HepG2 (cell line): ENCODE measurements at regions of chr4 and their contacts with region 1.

Region 1: GRCh38 chr4:73019462-73020047 is 50.0 kb downstream of the COX18 start:
- DNase-seq: peak; percentile 23
- ATAC-seq: no peak
- H3K4me3 ChIP-seq: no peak overlapping the region
- H3K27ac ChIP-seq: no peak overlapping the region
- H3K4me1 ChIP-seq: no peaks in the 10 kb centered on the region
- H3K27me3 ChIP-seq: no peaks in the 10 kb centered on the region
- CTCF ChIP-seq: peak; percentile 58
- EP300 ChIP-seq: no peak
- POLR2A ChIP-seq: no peak
- RAD21 ChIP-seq: no peak

Region 2: GRCh38 chr4:71732706-71733105 is 1286.8 kb before region 1 on chr4:
- CTCF ChIA-PET with region 1: no interaction called
- POLR2A ChIA-PET with region 1: no interaction called
- in situ Hi-C with region 1: no loop called
- intact Hi-C with region 1: loop called (anchors 5 kb)
- DNase-seq: peak; percentile 13
- ATAC-seq: no peak
- H3K4me3 ChIP-seq: no peak overlapping the region
- H3K27ac ChIP-seq: no peak overlapping the region
- H3K4me1 ChIP-seq: no peaks in the 10 kb centered on the region
- H3K27me3 ChIP-seq: no peaks in the 10 kb centered on the region
- CTCF ChIP-seq: peak; percentile 46
- EP300 ChIP-seq: no peak
- POLR2A ChIP-seq: no peak
- RAD21 ChIP-seq: no peak

Region 3: DNA sequence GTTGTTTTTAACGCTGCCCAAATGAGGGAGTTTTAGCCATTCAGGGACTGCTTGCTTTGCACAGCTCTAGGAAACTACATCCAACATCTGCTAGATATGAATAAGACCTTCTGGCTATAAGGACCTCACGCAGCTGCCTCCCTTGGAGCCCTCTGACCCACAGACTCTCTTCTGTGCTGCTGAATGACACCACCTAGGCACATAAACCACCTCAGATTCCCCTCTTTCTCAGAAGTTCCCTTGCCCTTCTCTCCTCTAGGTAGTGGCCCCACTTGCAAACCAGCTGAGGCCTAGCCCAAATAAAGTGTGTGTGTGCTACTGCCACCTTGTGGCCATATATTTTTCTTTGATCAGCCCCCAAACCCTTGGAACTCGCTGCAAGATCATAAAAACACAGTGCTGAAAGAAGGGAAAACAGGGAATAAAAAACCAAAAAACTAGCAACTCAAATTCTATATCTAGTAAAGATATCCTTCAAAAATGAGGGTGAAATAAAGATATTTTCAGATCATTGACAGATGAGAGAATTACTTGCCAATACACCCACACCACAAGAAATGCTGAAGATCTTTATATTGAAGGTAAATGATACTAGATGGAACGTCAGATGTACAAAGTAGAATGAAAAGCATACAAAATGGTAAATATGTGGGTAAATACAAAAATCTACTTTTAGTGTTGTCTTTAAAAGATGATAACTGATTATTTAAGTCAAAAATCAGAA is 716.4 kb before region 1 on chr4:
- CTCF ChIA-PET with region 1: no interaction called
- POLR2A ChIA-PET with region 1: no interaction called
- in situ Hi-C with region 1: loop called (anchors 25 kb)
- intact Hi-C with region 1: no loop called
- DNase-seq: peak; percentile 34
- ATAC-seq: peak; percentile 93
- H3K4me3 ChIP-seq: no peak overlapping the region
- H3K27ac ChIP-seq: no peak overlapping the region
- H3K4me1 ChIP-seq: no peaks in the 10 kb centered on the region
- H3K27me3 ChIP-seq: no peaks in the 10 kb centered on the region
- CTCF ChIP-seq: peak; percentile 76
- EP300 ChIP-seq: no peak
- POLR2A ChIP-seq: no peak
- RAD21 ChIP-seq: no peak

Region 4: DNA sequence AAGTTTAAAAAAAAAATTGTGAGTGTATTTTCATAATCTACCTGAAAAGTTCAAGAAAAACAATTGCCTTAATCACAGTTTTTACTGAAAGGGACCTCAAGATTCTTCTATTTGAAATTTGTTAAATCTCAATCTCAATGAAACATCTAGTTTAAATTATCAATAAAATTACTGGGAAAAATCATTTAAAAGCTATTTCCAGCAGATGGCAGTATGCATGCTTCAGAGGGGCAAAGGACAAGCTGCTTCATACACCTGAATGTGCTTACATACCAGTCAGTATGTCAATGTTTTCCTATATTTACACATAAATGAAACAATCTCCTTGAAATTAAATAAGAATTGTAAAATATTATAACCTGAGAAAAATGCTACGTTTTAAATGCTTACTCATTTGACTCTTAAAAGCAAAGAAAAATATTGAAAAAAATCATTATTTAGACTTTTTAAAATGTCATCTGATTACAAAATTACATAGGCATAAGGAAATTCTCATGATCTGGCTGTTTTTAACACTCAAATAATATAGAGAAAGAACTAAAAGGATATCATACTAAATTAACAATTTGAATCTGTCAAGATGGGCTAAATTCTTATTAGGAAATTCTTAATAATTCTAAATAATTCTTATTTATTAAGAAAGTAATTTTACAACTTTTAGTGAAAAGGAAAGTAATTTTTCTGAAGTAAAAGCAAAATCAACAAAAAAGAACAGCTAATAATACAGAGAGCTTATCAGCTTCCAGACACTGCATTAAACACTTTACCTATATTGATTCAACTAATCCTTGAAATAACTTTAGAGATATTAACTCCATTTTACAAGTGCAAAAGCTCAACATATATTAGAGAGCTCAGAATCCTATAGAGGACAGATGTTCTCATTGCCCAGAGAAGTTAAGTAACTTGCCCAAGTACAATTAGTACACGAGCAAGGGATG is 692.6 kb before region 1 on chr4:
- CTCF ChIA-PET with region 1: interaction called, 10 read pairs
- POLR2A ChIA-PET with region 1: no interaction called
- in situ Hi-C with region 1: loop called (anchors 25 kb)
- intact Hi-C with region 1: loop called (anchors 1 kb)
- DNase-seq: peak; percentile 33
- ATAC-seq: peak; percentile 49; the same call in 2 of the 3 replicates
- H3K4me3 ChIP-seq: no peak overlapping the region
- H3K27ac ChIP-seq: no peak overlapping the region
- H3K4me1 ChIP-seq: no peaks in the 10 kb centered on the region
- H3K27me3 ChIP-seq: no peaks in the 10 kb centered on the region; a peak in 1 of 5 replicates
- CTCF ChIP-seq: peak; percentile 54
- EP300 ChIP-seq: no peak
- POLR2A ChIP-seq: no peak
- RAD21 ChIP-seq: no peak

Region 5: DNA sequence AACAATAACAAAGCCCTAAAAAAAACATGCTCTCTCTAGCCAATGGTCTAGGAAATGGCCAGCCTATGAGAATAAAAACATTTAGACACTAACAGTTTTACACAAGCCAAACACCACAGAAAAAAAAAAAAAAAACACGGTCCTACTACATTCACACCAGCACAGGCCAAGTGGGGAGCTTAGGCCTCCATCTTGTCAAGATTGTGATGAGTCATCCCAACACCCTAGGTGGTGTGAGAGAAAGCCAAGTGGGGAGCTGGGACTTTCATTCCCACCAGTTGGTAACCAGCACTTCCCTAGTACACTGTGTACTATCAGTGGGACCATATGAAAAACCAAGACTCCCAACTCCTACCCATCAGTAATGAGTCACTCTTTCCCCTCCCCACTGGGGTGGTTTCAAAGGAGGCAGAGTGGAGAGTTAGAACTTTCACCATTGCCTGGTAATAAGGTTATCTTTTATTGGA is 546.1 kb before region 1 on chr4:
- CTCF ChIA-PET with region 1: no interaction called
- POLR2A ChIA-PET with region 1: no interaction called
- in situ Hi-C with region 1: no loop called
- intact Hi-C with region 1: no loop called
- DNase-seq: no peak
- ATAC-seq: no peak
- H3K4me3 ChIP-seq: no peak overlapping the region
- H3K27ac ChIP-seq: no peak overlapping the region
- H3K4me1 ChIP-seq: no peaks in the 10 kb centered on the region
- H3K27me3 ChIP-seq: no peaks in the 10 kb centered on the region
- CTCF ChIP-seq: no peak
- EP300 ChIP-seq: no peak
- POLR2A ChIP-seq: no peak
- RAD21 ChIP-seq: no peak

Region 6: GRCh38 chr4:72505314-72505744 is 514.2 kb before region 1 on chr4:
- CTCF ChIA-PET with region 1: interaction called, 12 read pairs
- POLR2A ChIA-PET with region 1: no interaction called
- in situ Hi-C with region 1: loop called (anchors 5 kb)
- intact Hi-C with region 1: no loop called
- DNase-seq: peak; percentile 24
- ATAC-seq: peak; percentile 92
- H3K4me3 ChIP-seq: no peak overlapping the region
- H3K27ac ChIP-seq: no peak overlapping the region
- H3K4me1 ChIP-seq: no peaks in the 10 kb centered on the region
- H3K27me3 ChIP-seq: no peaks in the 10 kb centered on the region
- CTCF ChIP-seq: peak; percentile 71
- EP300 ChIP-seq: no peak
- POLR2A ChIP-seq: no peak
- RAD21 ChIP-seq: 0 out of 2 replicates have a peak, but pooled peaks have one; percentile 19

Region 7: GRCh38 chr4:72531768-72532290 is 487.7 kb before region 1 on chr4:
- CTCF ChIA-PET with region 1: no interaction called
- POLR2A ChIA-PET with region 1: no interaction called
- in situ Hi-C with region 1: no loop called
- intact Hi-C with region 1: no loop called
- DNase-seq: no peak
- ATAC-seq: no peak
- H3K4me3 ChIP-seq: no peak overlapping the region
- H3K27ac ChIP-seq: no peak overlapping the region
- H3K4me1 ChIP-seq: no peaks in the 10 kb centered on the region
- H3K27me3 ChIP-seq: no peaks in the 10 kb centered on the region
- CTCF ChIP-seq: no peak
- EP300 ChIP-seq: no peak
- POLR2A ChIP-seq: no peak
- RAD21 ChIP-seq: no peak

Region 8: DNA sequence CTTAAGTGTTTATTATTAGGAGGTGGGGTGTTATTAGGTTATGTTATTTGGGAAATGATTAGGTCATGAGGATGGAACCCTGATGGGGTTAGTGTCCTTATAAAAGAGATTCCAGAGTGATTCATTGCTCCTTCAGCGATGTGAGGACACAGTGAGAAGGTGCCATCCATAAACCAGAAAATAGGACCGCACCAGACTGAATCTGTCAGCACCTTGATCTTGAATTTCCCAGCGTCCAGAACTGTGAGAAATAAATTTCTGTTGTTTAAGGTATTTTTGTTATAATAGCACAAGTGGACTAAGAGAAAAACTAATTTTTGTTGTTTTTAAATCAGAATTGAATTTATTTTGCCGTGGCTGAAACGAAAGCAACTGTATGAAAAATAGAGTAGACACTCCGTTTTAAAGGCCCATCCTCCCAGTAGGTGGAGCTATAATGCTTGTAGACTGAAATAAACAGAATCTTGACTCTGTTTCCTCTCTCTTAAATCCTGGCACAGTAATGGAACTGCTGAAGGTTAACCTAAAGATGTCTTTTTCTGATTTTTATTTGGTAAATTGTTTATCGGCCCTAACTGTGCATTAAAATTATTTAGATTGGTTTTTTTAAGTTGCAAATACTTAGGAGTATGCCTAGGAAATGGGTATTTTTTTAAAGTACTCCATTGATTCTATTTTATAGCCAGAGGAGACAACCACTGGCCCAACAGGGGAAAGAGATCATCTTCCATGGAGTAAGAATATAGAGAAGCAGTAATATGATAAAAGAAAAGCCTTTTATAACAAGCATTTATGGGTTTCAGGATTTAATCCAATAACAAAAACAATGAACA is 317.4 kb before region 1 on chr4:
- CTCF ChIA-PET with region 1: interaction called, 8 read pairs
- POLR2A ChIA-PET with region 1: no interaction called
- in situ Hi-C with region 1: loop called (anchors 10 kb)
- intact Hi-C with region 1: loop called (anchors 1 kb)
- DNase-seq: peak; percentile 42
- ATAC-seq: peak; percentile 78
- H3K4me3 ChIP-seq: peak overlapping the region; percentile 41 to 62 (median 44); a peak in 5 of 6 replicates
- H3K27ac ChIP-seq: no peak overlapping the region
- H3K4me1 ChIP-seq: no peaks in the 10 kb centered on the region
- H3K27me3 ChIP-seq: no peaks in the 10 kb centered on the region
- CTCF ChIP-seq: peak; percentile 70
- EP300 ChIP-seq: no peak
- POLR2A ChIP-seq: no peak
- RAD21 ChIP-seq: no peak

Region 9: DNA sequence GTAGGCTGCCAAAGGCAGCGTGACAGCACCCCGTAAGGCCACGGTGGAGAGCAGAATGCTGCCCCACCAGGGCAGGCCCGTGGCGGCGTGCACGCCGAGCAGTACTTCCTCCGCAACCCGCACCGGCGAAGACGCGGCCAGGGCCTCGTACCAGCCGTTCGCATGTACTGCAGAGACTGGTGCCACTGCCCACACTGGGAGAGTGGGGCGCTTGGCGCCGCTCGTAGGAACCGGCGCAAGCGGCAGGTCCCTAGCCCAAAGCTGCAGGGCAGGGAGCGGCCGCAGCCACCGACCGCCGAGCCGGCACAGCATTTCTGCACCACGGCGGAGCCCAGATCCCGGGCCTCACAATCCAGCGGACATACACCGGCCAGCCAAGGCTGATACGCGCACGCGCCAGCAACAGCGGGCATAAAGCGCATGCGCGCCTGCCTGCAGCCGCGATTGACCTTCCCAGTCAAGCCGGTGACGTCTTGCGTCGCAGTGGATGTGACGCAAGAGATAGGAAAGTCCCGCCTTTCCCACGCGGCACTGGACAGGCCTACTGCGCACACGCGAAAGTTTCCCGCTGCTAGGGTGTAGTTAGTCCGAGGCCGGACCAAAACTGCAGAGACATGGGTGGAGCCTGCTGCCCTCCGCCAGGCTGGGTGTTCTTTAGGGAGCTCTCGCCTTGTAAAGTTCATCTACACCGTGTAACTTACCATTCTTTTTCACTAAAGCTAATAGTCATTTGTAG is 50.0 kb after region 1 on chr4 and contains the start of gene COX18:
- CTCF ChIA-PET with region 1: no interaction called
- POLR2A ChIA-PET with region 1: no interaction called
- in situ Hi-C with region 1: no loop called
- intact Hi-C with region 1: no loop called
- DNase-seq: peak; percentile 95
- ATAC-seq: peak; percentile 91
- H3K4me3 ChIP-seq: peak within 1 kb of the TSS; percentile 79 to 83 (median 81)
- H3K27ac ChIP-seq: peak within 1 kb of the TSS; percentile 95
- H3K4me1 ChIP-seq: peaks cover 23% of the 10 kb centered on the region
- H3K27me3 ChIP-seq: no peaks in the 10 kb centered on the region; a peak in 1 of 5 replicates
- CTCF ChIP-seq: peak; percentile 29; the same call in 1 of the 2 replicates
- EP300 ChIP-seq: 0 out of 4 replicates have a peak, but pooled peaks of 1 of the 2 experiments have one; percentile 15
- POLR2A ChIP-seq: peak; percentile 93 to 95
- RAD21 ChIP-seq: peak; percentile 72; the same call in 1 of the 2 replicates
- total RNA-seq, gene COX18: 21.3 and 25.3 TPM in 2 replicates

Region 10: DNA sequence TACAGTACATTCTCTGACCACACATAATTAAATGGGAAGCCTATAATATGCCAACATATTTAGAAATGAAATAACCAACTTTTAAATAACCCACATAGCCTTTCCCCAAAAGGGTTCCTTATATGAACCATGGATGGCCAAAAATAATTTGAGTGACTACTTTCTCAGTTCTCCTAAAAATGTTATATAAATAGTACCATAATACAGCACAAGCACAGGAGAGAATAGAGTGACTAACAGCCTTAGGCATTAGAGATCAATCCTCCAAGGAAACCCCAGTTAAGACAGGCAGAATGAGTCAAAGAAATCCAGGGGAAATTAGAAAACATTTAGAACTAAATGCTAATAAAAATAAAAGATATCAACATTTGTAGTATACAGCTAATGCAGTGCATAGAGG is 188.8 kb after region 1 on chr4:
- CTCF ChIA-PET with region 1: no interaction called
- POLR2A ChIA-PET with region 1: no interaction called
- in situ Hi-C with region 1: no loop called
- intact Hi-C with region 1: no loop called
- DNase-seq: no peak
- ATAC-seq: no peak
- H3K4me3 ChIP-seq: no peak overlapping the region
- H3K27ac ChIP-seq: no peak overlapping the region
- H3K4me1 ChIP-seq: no peaks in the 10 kb centered on the region
- H3K27me3 ChIP-seq: no peaks in the 10 kb centered on the region
- CTCF ChIP-seq: no peak
- EP300 ChIP-seq: no peak
- POLR2A ChIP-seq: no peak
- RAD21 ChIP-seq: no peak